ENCODE measurements at regions of chr1 and their contacts with region 1.

Region 1: DNA sequence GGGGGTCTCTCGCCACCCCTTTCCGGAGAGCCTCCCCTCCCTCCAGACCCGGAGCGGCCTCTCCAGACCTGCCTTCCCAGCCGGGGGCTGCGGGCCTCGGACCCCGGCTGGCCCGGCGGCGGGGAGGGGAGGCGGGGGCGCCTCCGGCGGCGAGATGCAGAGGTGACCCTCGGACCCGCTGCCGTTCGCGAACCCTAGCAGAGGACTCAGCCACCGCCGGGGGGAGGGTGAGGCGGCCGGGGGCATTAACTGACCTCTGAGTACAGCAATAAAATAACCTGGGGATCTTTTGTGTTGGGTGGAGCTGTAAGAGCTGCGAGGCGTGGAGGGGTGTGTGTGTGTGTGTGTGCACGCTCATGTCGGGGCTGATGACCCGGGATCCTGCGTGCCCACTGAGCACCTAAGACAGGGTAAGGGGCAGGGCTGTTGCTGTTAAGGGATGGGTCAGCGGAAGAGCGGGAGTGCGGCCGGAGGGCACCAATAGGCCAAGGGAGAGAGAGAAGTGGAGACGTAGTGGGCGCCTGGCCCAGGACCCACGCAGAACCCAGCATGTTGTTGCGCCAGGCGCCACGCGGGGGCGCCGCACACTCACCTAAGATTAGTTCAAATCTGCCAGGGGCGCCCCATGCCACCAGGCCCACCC is 6.3 kb downstream of the HAPLN2 start:
- DNase-seq: peak; percentile 69
- ATAC-seq: peak; percentile 79
- H3K4me3 ChIP-seq: no peak overlapping the region
- H3K27ac ChIP-seq: peak overlapping the region; percentile 42
- H3K4me1 ChIP-seq: peaks cover 23% of the 10 kb centered on the region
- H3K27me3 ChIP-seq: peaks cover 74% of the 10 kb centered on the region
- CTCF ChIP-seq: peak; percentile 73

Region 2: DNA sequence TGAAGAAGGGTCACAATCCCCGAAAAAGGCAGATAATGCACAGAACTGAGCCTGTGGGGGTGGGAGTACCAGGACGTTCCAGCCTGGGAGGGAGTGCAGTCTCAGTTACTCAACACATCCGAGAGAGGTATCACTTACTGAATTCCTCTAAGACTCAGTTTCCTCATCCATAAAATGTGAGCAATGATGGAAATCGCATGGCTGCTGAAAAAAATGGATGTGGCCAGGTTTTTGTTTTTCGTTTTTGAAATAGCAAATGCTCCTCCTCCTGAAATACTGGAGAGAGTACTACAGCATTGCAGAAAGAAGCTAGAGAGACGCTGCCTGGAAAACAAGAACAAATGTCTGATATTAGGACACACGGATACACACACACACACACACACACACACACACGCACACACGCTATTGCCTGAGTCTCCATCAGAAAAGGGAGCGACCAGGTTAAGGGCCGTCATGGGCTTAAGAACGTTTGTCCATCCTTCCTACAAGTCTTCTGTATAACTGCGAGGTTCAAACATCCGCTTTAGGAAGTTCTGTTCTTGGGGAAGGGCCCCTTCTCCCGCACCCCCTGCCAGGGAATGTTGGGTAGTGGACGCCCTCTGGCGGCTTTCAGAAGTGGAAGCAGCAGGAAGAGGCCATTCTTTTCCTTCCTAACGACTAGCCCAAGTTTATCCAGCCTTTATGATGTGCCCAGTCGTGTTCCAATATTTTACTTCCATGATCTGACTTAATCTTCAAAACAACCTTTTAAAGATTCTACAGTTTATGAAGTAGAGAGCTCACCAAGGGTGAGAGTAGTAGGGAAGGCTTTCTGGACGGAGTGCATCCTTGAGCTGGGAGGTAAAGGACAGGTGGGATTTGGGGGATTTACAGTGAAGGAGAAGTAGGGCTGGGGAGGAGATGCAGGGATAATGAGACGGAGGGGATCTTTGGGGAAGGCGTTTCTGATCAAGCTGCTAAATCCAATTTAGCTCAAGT is 52.3 kb after region 1 on chr1:
- intact Hi-C with region 1: loop called (anchors 10 kb)
- DNase-seq: no peak
- ATAC-seq: peak; percentile 76
- H3K4me3 ChIP-seq: peak overlapping the region; percentile 58
- H3K27ac ChIP-seq: peak overlapping the region; percentile 48
- H3K4me1 ChIP-seq: peaks cover 4% of the 10 kb centered on the region
- H3K27me3 ChIP-seq: peaks cover 50% of the 10 kb centered on the region
- CTCF ChIP-seq: peak; percentile 80